Activated T-helper 1 cell treated with anti-CD3 and anti-CD28 coated beads, Interleukin-12 subunit alpha, Interleukin-12 subunit beta, Interleukin-2, Interleukin-4 antibody, amounts not matched to agents 30 ng/mL and 10 ng/mL and 1 ng/mL, durations not matched to agents 14 hours and 24 hours and 36 hours (primary cell): ENCODE measurements at regions of chr18 and their contacts with region 1.

Region 1: DNA sequence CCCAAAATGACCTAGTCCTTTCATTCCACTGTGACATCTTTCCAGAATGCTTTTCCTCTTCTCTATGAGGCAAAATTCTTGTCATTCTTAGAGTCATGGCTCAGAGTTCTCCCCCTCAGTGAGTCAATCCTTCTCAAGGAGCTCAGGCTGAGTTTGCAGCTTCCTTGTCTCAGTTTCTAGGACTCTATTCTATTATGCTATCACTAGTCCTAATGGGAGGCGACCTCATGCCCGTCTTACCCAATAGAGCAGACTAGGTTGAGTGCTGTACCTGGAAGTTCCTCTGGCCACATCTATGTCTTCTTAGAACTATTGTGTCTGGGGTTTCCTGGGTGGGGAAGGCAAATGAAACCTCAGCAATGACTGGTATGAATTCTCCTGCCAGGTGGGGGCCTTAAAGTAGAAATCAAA is 51.5 kb downstream of the HAUS1 start:
- DNase-seq: peak; percentile 56
- H3K4me3 Mint-ChIP-seq: peak overlapping the region; percentile 73
- H3K27ac Mint-ChIP-seq: peak overlapping the region; percentile 92
- H3K4me1 Mint-ChIP-seq: peaks cover 58% of the 10 kb centered on the region
- H3K27me3 Mint-ChIP-seq: peaks cover 4% of the 10 kb centered on the region

Region 2: GRCh38 chr18:46104128-46104911 is 51.3 kb before region 1 on chr18 and contains the start of gene HAUS1:
- intact Hi-C with region 1: loop called (anchors 5 kb)
- DNase-seq: peak; percentile 79
- H3K4me3 Mint-ChIP-seq: peak within 1 kb of the TSS; percentile 96
- H3K27ac Mint-ChIP-seq: peak within 1 kb of the TSS; percentile 90
- H3K4me1 Mint-ChIP-seq: peaks cover 21% of the 10 kb centered on the region
- H3K27me3 Mint-ChIP-seq: peaks cover 2% of the 10 kb centered on the region
- total RNA-seq, gene HAUS1: 41.8 and 42.1 TPM in 2 replicates

Region 3: GRCh38 chr18:46166261-46166970 is 10.8 kb after region 1 on chr18:
- intact Hi-C with region 1: no loop called
- DNase-seq: no peak
- H3K4me3 Mint-ChIP-seq: no peak overlapping the region
- H3K27ac Mint-ChIP-seq: no peak overlapping the region
- H3K4me1 Mint-ChIP-seq: peaks cover 32% of the 10 kb centered on the region
- H3K27me3 Mint-ChIP-seq: peaks cover 2% of the 10 kb centered on the region